Gastrocnemius medialis (tissue), 4 donors: ENCODE measurements at regions of chr1 and their contacts with region 1.

Region 1: GRCh38 chr1:181152892-181153633 is 64.6 kb downstream of the IER5 start:
- DNase-seq: peak; percentile 94 to 98
- ATAC-seq: peak; percentile 78 to 79
- H3K4me3 ChIP-seq: no peak overlapping the region
- H3K27ac ChIP-seq: peak overlapping the region; percentile 93 to 99 (median 98)
- H3K4me1 ChIP-seq: peaks cover 48 to 55% of the 10 kb centered on the region in 2 donors
- H3K27me3 ChIP-seq: no peaks in the 10 kb centered on the region
- CTCF ChIP-seq: peak in 4 of 5 experiments; percentile 41 to 57 (median 42)
- POLR2A ChIP-seq: peak; percentile 66 to 85

Region 2: DNA sequence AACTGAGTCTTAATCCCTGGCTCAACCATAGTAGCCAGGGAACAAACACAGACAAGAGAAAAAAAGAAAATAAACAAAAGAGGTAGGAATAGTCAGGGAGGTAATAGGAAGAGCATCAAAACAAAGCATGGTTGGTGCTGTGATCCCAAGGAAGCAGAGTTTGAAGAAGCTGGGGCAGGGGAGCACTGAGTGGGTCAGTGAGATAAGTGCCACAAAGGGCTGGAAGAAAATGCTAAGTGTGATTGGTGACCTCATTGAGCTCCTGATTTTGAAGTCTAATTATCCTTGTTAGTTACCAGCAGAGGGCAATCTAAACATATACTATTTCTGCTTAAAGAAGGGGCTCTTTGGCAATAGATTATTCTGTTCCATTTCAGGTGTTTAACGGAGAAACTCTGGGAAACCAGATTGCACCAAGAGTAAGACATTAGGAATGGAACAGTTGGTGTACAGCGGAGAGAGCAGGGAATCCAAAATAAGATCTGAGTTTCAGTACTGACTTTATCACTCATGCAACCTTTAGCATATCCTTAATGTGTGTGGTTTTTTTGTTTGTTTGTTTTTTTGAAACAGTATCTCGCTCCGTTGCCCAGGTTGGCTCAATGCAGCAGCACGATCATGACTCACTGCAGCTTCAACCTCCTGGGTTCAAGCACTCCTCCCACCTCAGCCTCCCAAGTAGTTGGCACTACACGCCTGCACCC is 271.1 kb before region 1 on chr1:
- in situ Hi-C with region 1: loop called in 2 of 4 experiments (anchors 10 to 25 kb)
- intact Hi-C with region 1: no loop called
- DNase-seq: no peak
- ATAC-seq: peak in 1 of 2 donors; percentile 56
- H3K4me3 ChIP-seq: no peak overlapping the region
- H3K27ac ChIP-seq: no peak overlapping the region
- H3K4me1 ChIP-seq: peaks cover 0 to 6% of the 10 kb centered on the region in 2 donors
- H3K27me3 ChIP-seq: no peaks in the 10 kb centered on the region
- CTCF ChIP-seq: peak; percentile 22 to 50 (median 39)
- POLR2A ChIP-seq: no peak

Region 3: GRCh38 chr1:180954005-180954800 is 198.9 kb before region 1 on chr1:
- in situ Hi-C with region 1: no loop called
- intact Hi-C with region 1: loop called (anchors 5 kb)
- DNase-seq: peak in 1 of 2 donors; percentile 41
- ATAC-seq: peak; percentile 39 to 41
- H3K4me3 ChIP-seq: peak overlapping the region; percentile 48 to 87 (median 62)
- H3K27ac ChIP-seq: peak overlapping the region; percentile 67 to 77 (median 72)
- H3K4me1 ChIP-seq: peaks cover 29 to 43% of the 10 kb centered on the region in 2 donors
- H3K27me3 ChIP-seq: no peaks in the 10 kb centered on the region
- CTCF ChIP-seq: peak in 2 of 5 experiments; percentile 0 to 18
- POLR2A ChIP-seq: no peak

Region 4: GRCh38 chr1:180975551-180975950 is 177.5 kb before region 1 on chr1:
- in situ Hi-C with region 1: no loop called
- intact Hi-C with region 1: loop called (anchors 5 kb)
- DNase-seq: no peak
- ATAC-seq: no peak
- H3K4me3 ChIP-seq: no peak overlapping the region
- H3K27ac ChIP-seq: no peak overlapping the region
- H3K4me1 ChIP-seq: peaks cover 8 to 15% of the 10 kb centered on the region in 2 donors
- H3K27me3 ChIP-seq: no peaks in the 10 kb centered on the region
- CTCF ChIP-seq: no peak
- POLR2A ChIP-seq: no peak

Region 5: DNA sequence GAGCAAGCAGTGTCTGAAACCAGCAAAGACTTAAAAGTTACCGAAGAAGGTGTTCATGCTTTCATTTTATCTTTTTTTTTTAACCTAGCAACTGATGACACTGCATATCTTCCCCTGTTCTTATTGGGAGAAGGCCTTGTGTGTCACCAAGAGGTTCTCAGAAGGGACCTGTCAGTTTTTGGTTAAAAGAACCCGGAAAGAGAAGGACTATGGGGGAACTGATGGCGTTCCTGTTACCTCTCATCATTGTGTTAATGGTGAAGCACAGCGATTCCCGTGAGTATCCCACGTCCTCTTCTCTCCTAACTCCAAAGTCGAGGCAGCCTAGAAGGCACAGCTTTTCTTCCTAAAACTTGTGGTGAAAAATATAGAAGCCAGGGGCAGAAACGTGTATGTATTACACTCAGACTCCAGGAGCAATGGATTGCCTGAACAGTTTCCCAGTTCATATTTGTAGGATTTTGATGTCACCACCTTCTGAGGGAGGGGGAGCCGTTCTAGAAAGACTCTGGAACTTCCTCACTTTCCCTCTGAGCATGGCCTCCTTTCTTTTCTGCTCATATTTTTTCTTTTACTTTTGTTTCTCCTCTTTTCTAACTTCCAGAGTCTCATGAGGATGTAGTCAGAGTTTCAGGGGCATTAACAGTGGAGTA is 119.1 kb before region 1 on chr1 and contains the start of gene MR1:
- in situ Hi-C with region 1: loop called (anchors 5 to 10 kb)
- intact Hi-C with region 1: no loop called
- DNase-seq: no peak
- ATAC-seq: peak; percentile 94
- H3K4me3 ChIP-seq: peak within 1 kb of the TSS; percentile 42 to 57 (median 49)
- H3K27ac ChIP-seq: peak within 1 kb of the TSS; percentile 84 to 91 (median 90)
- H3K4me1 ChIP-seq: peaks cover 13 to 17% of the 10 kb centered on the region in 2 donors
- H3K27me3 ChIP-seq: no peaks in the 10 kb centered on the region
- CTCF ChIP-seq: no peak
- POLR2A ChIP-seq: peak; percentile 21 to 55
- total RNA-seq, gene MR1: 1.6 to 3.5 (median 3.0) TPM

Region 6: GRCh38 chr1:181062836-181063428 is 90.1 kb before region 1 on chr1:
- in situ Hi-C with region 1: no loop called
- intact Hi-C with region 1: loop called (anchors 1 kb)
- DNase-seq: peak; percentile 42 to 66
- ATAC-seq: peak; percentile 65 to 73
- H3K4me3 ChIP-seq: peak overlapping the region; percentile 37 to 47 (median 42)
- H3K27ac ChIP-seq: peak overlapping the region; percentile 89 to 100 (median 94)
- H3K4me1 ChIP-seq: peaks cover 28 to 38% of the 10 kb centered on the region in 2 donors
- H3K27me3 ChIP-seq: no peaks in the 10 kb centered on the region
- CTCF ChIP-seq: no peak
- POLR2A ChIP-seq: peak in 1 of 2 donors; percentile 25

Region 7: DNA sequence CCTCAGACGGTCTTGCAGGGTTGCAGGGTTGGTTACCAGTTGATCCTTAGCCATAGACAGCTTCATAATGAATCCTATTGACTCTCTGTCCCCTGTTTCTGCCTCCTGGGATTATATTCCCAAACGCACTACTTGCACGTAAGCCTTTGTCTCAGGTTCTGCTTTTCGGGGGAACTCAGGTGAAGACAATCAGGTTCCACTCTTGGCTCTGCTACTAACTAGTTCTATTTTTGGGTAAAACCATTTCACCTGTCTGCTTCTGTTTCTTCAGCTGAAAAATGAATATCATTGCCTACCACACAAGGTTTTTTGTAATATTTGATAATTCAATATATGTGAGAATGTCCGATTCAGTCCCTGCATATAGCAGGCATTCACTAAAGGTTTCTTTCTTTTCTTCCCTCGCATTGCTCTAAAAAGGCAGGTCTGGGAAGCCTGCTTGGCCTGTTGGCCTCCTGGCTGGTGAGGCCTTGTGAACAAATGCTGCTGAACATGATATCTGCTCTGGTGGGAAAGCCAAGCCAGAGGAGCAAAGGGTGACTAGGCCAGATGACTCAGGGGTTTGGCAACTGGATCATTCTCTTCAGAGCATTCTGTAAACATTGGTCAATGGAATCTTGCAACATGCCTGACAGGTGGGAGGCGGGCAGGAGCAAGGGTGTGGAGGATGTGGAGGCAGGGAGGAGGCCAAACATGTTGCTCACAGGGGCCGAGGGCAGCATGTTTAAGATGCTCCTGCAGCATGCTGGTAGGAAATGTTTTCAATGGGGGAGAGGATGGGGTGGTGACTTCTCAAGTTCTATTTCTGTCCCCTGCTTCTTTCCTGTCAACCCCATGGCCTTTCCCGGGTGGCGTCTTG is 40.8 kb before region 1 on chr1:
- in situ Hi-C with region 1: no loop called
- intact Hi-C with region 1: loop called (anchors 1 kb)
- DNase-seq: peak; percentile 98 to 99
- ATAC-seq: peak; percentile 94 to 96
- H3K4me3 ChIP-seq: peak overlapping the region in 2 of 4 donors; percentile 4 to 31
- H3K27ac ChIP-seq: peak overlapping the region; percentile 87 to 95 (median 91)
- H3K4me1 ChIP-seq: peaks cover 28 to 32% of the 10 kb centered on the region in 2 donors
- H3K27me3 ChIP-seq: no peaks in the 10 kb centered on the region
- CTCF ChIP-seq: no peak
- POLR2A ChIP-seq: peak; percentile 60 to 78